G401 (cell line): ENCODE measurements at regions of chr17 and their contacts with region 1.

Region 1: GRCh38 chr17:36948717-36949460 is at the start of gene AATF:
- DNase-seq: peak; percentile 96
- total RNA-seq, gene AATF: 39.4 and 54.7 TPM in 2 replicates

Region 2: DNA sequence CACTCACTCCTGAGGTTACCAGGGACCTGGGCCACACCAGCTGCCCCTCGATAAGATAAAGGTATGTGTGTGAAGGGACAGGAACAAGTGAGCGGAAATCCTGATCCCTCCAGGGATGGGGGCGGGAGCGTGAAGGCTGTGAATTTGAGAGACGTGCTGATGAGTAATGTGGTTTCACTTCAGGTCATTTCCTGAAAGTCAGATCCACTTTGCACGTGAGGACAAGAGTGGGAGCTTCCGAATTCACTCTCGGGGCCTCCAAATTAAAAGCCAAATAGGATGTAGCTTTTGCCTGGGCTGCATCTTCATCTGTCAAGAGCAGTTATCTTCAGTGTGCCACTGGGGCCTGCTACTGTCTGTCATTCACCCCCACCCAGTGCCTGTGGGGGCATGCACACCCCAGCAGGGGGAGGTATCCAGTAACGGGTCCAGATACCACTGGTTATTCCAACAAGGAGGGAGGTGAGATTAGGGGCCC is 99.0 kb before region 1 on chr17:
- in situ Hi-C with region 1: loop called (anchors 25 kb)
- DNase-seq: no peak